BJ (cell line): ENCODE measurements at regions of chr2 and their contacts with region 1.

Region 1: GRCh38 chr2:64523666-64524603 is at the start of gene AFTPH:
- DNase-seq: peak; percentile 93
- H3K4me3 ChIP-seq: peak within 1 kb of the TSS; percentile 73
- H3K27me3 ChIP-seq: peaks cover 6% of the 10 kb centered on the region
- CTCF ChIP-seq: no peak
- polyA plus RNA-seq, gene AFTPH: 10.9 and 21.7 TPM in 2 replicates

Region 2: GRCh38 chr2:64434039-64434657 is 89.8 kb before region 1 on chr2:
- CTCF ChIA-PET with region 1: no interaction called
- POLR2A ChIA-PET with region 1: no interaction called
- DNase-seq: no peak
- H3K4me3 ChIP-seq: no peak overlapping the region
- H3K27me3 ChIP-seq: peaks cover 3% of the 10 kb centered on the region; the same call in 1 of the 2 replicates
- CTCF ChIP-seq: no peak

Region 3: GRCh38 chr2:64562148-64562784 is 38.3 kb after region 1 on chr2:
- CTCF ChIA-PET with region 1: interaction called, 10 read pairs
- POLR2A ChIA-PET with region 1: no interaction called
- DNase-seq: no peak
- H3K4me3 ChIP-seq: no peak overlapping the region
- H3K27me3 ChIP-seq: no peaks in the 10 kb centered on the region
- CTCF ChIP-seq: peak; percentile 36; the same call in 1 of the 2 replicates

Region 4: GRCh38 chr2:64888591-64889309 is 364.8 kb after region 1 on chr2:
- CTCF ChIA-PET with region 1: interaction called, 10 read pairs
- POLR2A ChIA-PET with region 1: no interaction called
- DNase-seq: no peak
- H3K4me3 ChIP-seq: no peak overlapping the region
- H3K27me3 ChIP-seq: peaks cover 4% of the 10 kb centered on the region; the same call in 1 of the 2 replicates
- CTCF ChIP-seq: peak; percentile 47